CD4-positive, alpha-beta memory T cell (primary cell): ENCODE measurements at regions of chr1 and their contacts with region 1.

Region 1: GRCh38 chr1:40040511-40041465 is at the start of gene CAP1:
- DNase-seq: peak; percentile 100
- H3K4me3 ChIP-seq: peak within 1 kb of the TSS; percentile 78 to 92
- H3K4me3 Mint-ChIP-seq: peak within 1 kb of the TSS; percentile 90 to 98 (median 96)
- H3K27ac ChIP-seq: peak within 1 kb of the TSS; percentile 86
- H3K27ac Mint-ChIP-seq: peak within 1 kb of the TSS; percentile 92 to 99 (median 97)
- H3K4me1 ChIP-seq: peaks cover 78% of the 10 kb centered on the region
- H3K4me1 Mint-ChIP-seq: peaks cover 44 to 91% (median 57%) of the 10 kb centered on the region in 4 donors
- H3K27me3 ChIP-seq: no peaks in the 10 kb centered on the region
- H3K27me3 Mint-ChIP-seq: no peaks in the 10 kb centered on the region
- total RNA-seq, gene CAP1: 285 to 305 TPM

Region 2: GRCh38 chr1:39845275-39846116 is 195.3 kb before region 1 on chr1:
- CTCF ChIA-PET with region 1: no interaction called
- POLR2A ChIA-PET with region 1: no interaction called
- intact Hi-C with region 1: no loop called
- DNase-seq: peak; percentile 86 to 96 (median 90)
- H3K4me3 ChIP-seq: no peak overlapping the region
- H3K4me3 Mint-ChIP-seq: peak overlapping the region; percentile 55 to 88 (median 67)
- H3K27ac ChIP-seq: peak overlapping the region; percentile 68
- H3K27ac Mint-ChIP-seq: peak overlapping the region; percentile 92 to 97 (median 93)
- H3K4me1 ChIP-seq: peaks cover 56% of the 10 kb centered on the region
- H3K4me1 Mint-ChIP-seq: peaks cover 46 to 64% (median 52%) of the 10 kb centered on the region in 4 donors
- H3K27me3 ChIP-seq: no peaks in the 10 kb centered on the region
- H3K27me3 Mint-ChIP-seq: no peaks in the 10 kb centered on the region

Region 3: DNA sequence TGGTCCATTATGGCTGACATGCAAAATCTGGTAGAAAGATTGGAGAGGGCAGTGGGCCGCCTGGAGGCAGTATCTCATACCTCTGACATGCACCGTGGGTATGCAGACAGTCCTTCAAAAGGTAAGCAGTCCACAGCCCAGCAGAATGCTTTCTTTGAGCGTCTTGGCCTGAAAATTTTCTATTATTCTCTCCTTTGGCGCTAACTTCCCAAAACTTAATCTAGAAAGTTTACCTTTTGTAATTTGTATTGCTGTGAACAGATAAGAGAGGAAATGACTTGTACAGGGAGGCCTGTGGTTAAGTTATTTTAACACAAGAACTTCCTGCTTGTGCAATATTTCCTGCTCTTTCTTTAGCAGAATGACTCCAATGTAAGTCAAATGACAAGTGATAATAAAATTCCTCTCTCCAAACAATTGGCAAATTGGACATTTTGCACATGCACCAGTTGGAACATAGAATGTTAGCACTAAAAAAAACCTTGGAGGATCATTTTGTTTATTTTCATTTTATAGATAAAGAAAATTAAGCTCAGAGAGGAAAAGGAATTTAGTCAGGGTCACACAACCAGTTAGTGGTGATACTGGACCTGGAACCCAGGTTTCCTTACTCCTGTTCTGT is 18.7 kb after region 1 on chr1:
- CTCF ChIA-PET with region 1: interaction called, 14 read pairs
- POLR2A ChIA-PET with region 1: interaction called, 115 read pairs
- intact Hi-C with region 1: loop called (anchors 1 kb)
- DNase-seq: peak; percentile 52 to 58 (median 55)
- H3K4me3 ChIP-seq: peak overlapping the region in 1 of 2 donors; percentile 32
- H3K4me3 Mint-ChIP-seq: peak overlapping the region; percentile 58 to 82 (median 79)
- H3K27ac ChIP-seq: peak overlapping the region; percentile 63
- H3K27ac Mint-ChIP-seq: peak overlapping the region; percentile 82 to 95 (median 89)
- H3K4me1 ChIP-seq: peaks cover 90% of the 10 kb centered on the region
- H3K4me1 Mint-ChIP-seq: peaks cover 77 to 92% (median 83%) of the 10 kb centered on the region in 4 donors
- H3K27me3 ChIP-seq: no peaks in the 10 kb centered on the region
- H3K27me3 Mint-ChIP-seq: no peaks in the 10 kb centered on the region

Region 4: GRCh38 chr1:40078512-40079333 is 37.9 kb after region 1 on chr1:
- CTCF ChIA-PET with region 1: interaction called, 10 read pairs
- POLR2A ChIA-PET with region 1: interaction called, 14 read pairs
- intact Hi-C with region 1: loop called (anchors 1 kb)
- DNase-seq: peak; percentile 41 to 64 (median 45)
- H3K4me3 ChIP-seq: no peak overlapping the region
- H3K4me3 Mint-ChIP-seq: no peak overlapping the region
- H3K27ac ChIP-seq: no peak overlapping the region
- H3K27ac Mint-ChIP-seq: peak overlapping the region in 5 of 7 donors; percentile 12 to 81 (median 70)
- H3K4me1 ChIP-seq: peaks cover 1% of the 10 kb centered on the region
- H3K4me1 Mint-ChIP-seq: peaks cover 2 to 11% (median 3%) of the 10 kb centered on the region in 4 donors
- H3K27me3 ChIP-seq: no peaks in the 10 kb centered on the region
- H3K27me3 Mint-ChIP-seq: no peaks in the 10 kb centered on the region

Region 5: DNA sequence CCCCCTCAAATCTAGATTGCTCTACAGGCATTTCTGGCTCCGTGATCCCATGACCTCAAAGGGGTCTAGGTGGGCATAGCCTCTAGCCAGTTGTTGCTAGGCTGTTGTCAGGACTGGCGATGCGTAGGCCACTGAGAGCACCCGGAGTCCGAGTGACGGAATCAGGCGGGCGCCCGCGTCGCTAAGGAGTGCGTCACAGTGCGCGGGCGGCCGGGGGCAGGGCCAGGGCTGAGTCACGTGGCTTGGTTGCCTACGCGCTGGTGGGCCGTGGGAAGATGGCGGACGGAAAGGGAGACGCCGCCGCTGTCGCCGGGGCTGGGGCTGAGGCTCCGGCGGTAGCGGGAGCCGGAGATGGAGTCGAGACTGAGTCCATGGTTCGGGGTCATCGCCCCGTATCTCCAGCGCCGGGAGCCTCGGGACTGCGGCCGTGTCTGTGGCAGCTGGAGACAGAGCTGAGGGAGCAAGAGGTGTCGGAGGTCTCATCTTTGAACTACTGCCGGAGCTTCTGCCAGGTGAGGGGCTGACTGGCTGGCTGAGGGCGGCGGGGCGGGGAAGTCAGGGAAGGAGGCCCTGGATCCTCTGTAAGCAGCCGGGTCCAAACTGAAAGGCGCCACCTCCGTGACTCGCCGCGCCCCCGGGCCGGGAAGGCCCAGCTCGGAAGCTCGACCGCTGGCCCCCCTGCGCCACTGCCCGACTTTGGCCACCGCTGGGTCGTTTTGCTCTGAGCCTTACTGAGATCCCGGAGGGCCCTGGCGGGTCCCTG is 120.5 kb after region 1 on chr1 and contains the start of gene RLF:
- CTCF ChIA-PET with region 1: no interaction called
- POLR2A ChIA-PET with region 1: no interaction called
- intact Hi-C with region 1: loop called (anchors 1 kb)
- DNase-seq: peak; percentile 93 to 95 (median 94)
- H3K4me3 ChIP-seq: peak within 1 kb of the TSS; percentile 77 to 94
- H3K4me3 Mint-ChIP-seq: peak within 1 kb of the TSS in 1 of 8 donors; percentile 60
- H3K27ac ChIP-seq: peak within 1 kb of the TSS; percentile 97
- H3K27ac Mint-ChIP-seq: peak within 1 kb of the TSS in 1 of 7 donors; percentile 99
- H3K4me1 ChIP-seq: peaks cover 49% of the 10 kb centered on the region
- H3K4me1 Mint-ChIP-seq: peaks cover 8 to 29% (median 19%) of the 10 kb centered on the region in 4 donors
- H3K27me3 ChIP-seq: no peaks in the 10 kb centered on the region
- H3K27me3 Mint-ChIP-seq: no peaks in the 10 kb centered on the region
- total RNA-seq, gene RLF: 23.0 to 23.4 TPM

Region 6: GRCh38 chr1:40385437-40386358 is 344.9 kb after region 1 on chr1:
- CTCF ChIA-PET with region 1: no interaction called
- POLR2A ChIA-PET with region 1: interaction called, 4 read pairs
- intact Hi-C with region 1: loop called (anchors 2 kb)
- DNase-seq: peak; percentile 90 to 95 (median 93)
- H3K4me3 ChIP-seq: peak overlapping the region; percentile 45 to 67
- H3K4me3 Mint-ChIP-seq: peak overlapping the region; percentile 78 to 94 (median 87)
- H3K27ac ChIP-seq: peak overlapping the region; percentile 99
- H3K27ac Mint-ChIP-seq: peak overlapping the region; percentile 95 to 100 (median 99)
- H3K4me1 ChIP-seq: peaks cover 97% of the 10 kb centered on the region
- H3K4me1 Mint-ChIP-seq: peaks cover 75 to 95% (median 85%) of the 10 kb centered on the region in 4 donors
- H3K27me3 ChIP-seq: no peaks in the 10 kb centered on the region
- H3K27me3 Mint-ChIP-seq: no peaks in the 10 kb centered on the region